PC-9 (cell line): ENCODE measurements at regions of chr2 and their contacts with region 1.

Region 1: GRCh38 chr2:160390543-160391455 is 102.8 kb downstream of the RBMS1 start:
- DNase-seq: peak in 1 of 2 experiments; percentile 42
- H3K4me3 ChIP-seq: no peak overlapping the region
- H3K27ac ChIP-seq: 0 out of 2 replicates have a peak overlapping the region, but pooled peaks have one; percentile 16
- H3K4me1 ChIP-seq: peaks cover 17% of the 10 kb centered on the region
- H3K27me3 ChIP-seq: no peaks in the 10 kb centered on the region
- CTCF ChIP-seq: no peak

Region 2: GRCh38 chr2:159409116-159409800 is 981.5 kb before region 1 on chr2:
- CTCF ChIA-PET with region 1: no interaction called
- POLR2A ChIA-PET with region 1: interaction called, 16 read pairs
- intact Hi-C with region 1: no loop called
- DNase-seq: no peak
- H3K4me3 ChIP-seq: no peak overlapping the region
- H3K27ac ChIP-seq: no peak overlapping the region
- H3K4me1 ChIP-seq: no peaks in the 10 kb centered on the region
- H3K27me3 ChIP-seq: no peaks in the 10 kb centered on the region
- CTCF ChIP-seq: no peak

Region 3: GRCh38 chr2:160472839-160473251 is 82.0 kb after region 1 on chr2:
- CTCF ChIA-PET with region 1: no interaction called
- POLR2A ChIA-PET with region 1: no interaction called
- intact Hi-C with region 1: no loop called
- DNase-seq: no peak
- H3K4me3 ChIP-seq: no peak overlapping the region
- H3K27ac ChIP-seq: no peak overlapping the region
- H3K4me1 ChIP-seq: no peaks in the 10 kb centered on the region
- H3K27me3 ChIP-seq: no peaks in the 10 kb centered on the region
- CTCF ChIP-seq: no peak

Region 4: GRCh38 chr2:161733025-161733424 is 1342.2 kb after region 1 on chr2:
- CTCF ChIA-PET with region 1: no interaction called
- POLR2A ChIA-PET with region 1: no interaction called
- intact Hi-C with region 1: no loop called
- DNase-seq: no peak
- H3K4me3 ChIP-seq: no peak overlapping the region
- H3K27ac ChIP-seq: no peak overlapping the region
- H3K4me1 ChIP-seq: no peaks in the 10 kb centered on the region
- H3K27me3 ChIP-seq: no peaks in the 10 kb centered on the region
- CTCF ChIP-seq: no peak